ENCODE measurements at regions of chr17 and their contacts with region 1.

Region 1: DNA sequence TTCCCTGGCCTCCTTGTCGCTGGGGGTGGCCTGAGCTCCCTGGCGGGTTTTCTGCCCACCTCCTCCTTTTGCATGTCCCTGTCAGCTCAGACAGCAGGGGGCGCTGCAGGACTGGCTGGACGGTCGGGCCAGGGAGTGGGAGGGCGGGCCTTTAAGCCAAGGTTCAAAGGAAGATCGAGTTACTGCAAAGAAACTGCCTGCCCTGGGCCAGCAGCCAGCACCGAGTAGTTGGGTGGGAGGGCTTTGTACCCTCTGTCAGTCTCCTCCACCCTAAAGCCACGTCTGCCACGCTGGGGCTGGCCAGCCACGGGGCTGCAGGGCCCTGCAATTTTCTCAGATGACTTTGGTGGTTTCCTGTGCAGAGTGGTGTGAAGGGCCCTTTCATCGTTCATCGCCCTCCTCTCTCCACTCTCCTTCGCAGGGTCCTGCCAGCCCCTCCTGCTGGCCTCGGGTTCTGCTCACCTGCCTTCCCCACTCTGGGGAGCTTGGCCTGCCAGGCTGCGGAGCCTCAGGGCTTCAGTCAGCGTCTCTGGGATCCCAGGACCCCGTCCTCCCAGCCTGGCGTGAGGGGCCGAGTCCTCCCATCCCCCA is 12.3 kb downstream of the GPR142 start:
- DNase-seq: peak; percentile 89 to 96 (median 93)
- H3K4me3 ChIP-seq: peak overlapping the region in 1 of 4 donors; percentile 13
- H3K27ac ChIP-seq: no peak overlapping the region
- H3K4me1 ChIP-seq: peaks cover 5 to 7% of the 10 kb centered on the region in 2 donors
- H3K27me3 ChIP-seq: no peaks in the 10 kb centered on the region
- CTCF ChIP-seq: peak; percentile 94 to 99 (median 98)
- POLR2A ChIP-seq: no peak

Region 2: GRCh38 chr17:74457146-74457819 is 77.7 kb after region 1 on chr17:
- intact Hi-C with region 1: loop called (anchors 2 kb)
- DNase-seq: peak; percentile 65 to 91 (median 78)
- H3K4me3 ChIP-seq: no peak overlapping the region
- H3K27ac ChIP-seq: no peak overlapping the region
- H3K4me1 ChIP-seq: peaks cover 12 to 29% of the 10 kb centered on the region in 2 donors
- H3K27me3 ChIP-seq: no peaks in the 10 kb centered on the region
- CTCF ChIP-seq: peak; percentile 92 to 99 (median 97)
- POLR2A ChIP-seq: no peak

Region 3: DNA sequence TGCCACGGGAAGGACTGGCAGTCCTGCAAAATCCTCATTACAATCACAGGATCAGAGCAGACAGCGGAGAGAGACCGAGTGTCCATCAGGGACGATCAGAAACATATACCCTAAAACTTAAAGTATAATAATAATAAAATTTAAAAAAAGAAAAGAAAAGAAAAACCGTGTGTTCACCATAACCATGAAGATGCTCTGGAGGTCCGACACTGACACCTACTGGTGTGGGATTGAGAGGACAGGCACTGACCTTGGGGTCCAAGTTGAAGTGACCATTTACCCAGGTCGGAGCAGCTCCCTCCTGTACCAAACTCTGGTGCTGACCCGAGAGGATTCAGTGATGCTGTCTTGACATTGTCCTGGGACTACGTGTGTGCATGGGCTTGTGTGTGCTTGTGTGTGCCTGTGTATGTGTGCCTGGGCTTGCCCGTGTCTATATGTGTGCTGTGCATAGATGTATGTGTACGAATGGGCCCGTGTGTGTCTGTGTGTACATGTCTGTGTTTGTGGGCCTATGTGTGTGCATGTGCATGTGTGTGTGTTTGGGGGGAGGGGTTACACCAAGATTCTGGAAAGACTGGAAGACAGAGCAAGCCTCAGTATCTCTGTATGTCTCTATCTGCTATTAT is 222.5 kb after region 1 on chr17:
- intact Hi-C with region 1: loop called in 1 of 2 experiments (anchors 10 kb)
- DNase-seq: peak in 5 of 7 donors; percentile 45 to 66 (median 51)
- H3K4me3 ChIP-seq: no peak overlapping the region
- H3K27ac ChIP-seq: no peak overlapping the region
- H3K4me1 ChIP-seq: peaks cover 0 to 9% of the 10 kb centered on the region in 2 donors
- H3K27me3 ChIP-seq: peaks cover 4% of the 10 kb centered on the region
- CTCF ChIP-seq: peak; percentile 20 to 63 (median 54)
- POLR2A ChIP-seq: no peak